ENCODE measurements at regions of chr1 and their contacts with region 1.

Region 1: DNA sequence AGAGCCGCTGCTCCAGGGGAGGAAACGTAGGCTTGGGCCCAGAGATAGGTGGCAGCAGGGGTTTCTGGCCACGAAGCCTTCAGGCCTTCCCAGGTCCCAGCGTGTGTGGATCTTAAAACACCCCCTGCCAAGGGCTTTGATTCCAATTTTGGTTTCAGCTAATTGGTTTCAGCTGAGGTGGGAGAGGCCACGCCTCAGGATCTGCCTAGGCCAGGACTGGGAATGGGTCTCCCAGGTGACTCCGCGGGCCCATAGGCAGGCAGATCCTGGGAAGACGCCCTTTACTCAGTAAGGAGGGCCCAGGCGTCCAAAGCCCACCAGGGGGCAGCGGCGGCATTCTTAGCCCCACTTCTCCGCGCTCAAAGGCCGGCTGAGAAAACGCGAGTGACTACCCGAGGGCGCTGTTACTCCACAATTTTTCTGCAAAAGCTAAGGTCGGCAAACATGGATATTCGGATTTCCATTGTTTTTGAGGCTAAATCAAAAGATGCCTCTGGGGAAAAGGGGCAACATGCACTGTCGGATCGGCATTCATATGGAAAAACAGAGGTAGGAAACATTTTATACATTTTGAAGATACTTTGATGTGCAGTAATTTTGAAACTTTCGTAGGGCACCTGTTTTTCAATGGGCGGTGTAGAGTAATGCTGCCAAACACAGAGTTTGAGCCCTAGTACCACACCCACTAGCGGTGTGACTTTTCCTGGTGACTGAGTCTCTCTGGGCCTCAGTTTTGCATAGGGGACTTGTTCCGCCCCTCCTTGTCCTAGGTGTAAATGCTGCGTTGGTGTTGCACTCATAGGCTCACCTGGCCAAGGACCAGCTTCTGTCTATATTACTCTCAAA is 31.8 kb upstream of the BCL10 start:
- DNase-seq: peak; percentile 57
- ATAC-seq: peak; percentile 95
- H3K4me3 Mint-ChIP-seq: peak overlapping the region; percentile 66
- H3K27ac Mint-ChIP-seq: peak overlapping the region; percentile 41
- H3K4me1 Mint-ChIP-seq: peaks cover 9% of the 10 kb centered on the region
- H3K27me3 Mint-ChIP-seq: peaks cover 2% of the 10 kb centered on the region
- CTCF ChIP-seq: peak; percentile 61

Region 2: DNA sequence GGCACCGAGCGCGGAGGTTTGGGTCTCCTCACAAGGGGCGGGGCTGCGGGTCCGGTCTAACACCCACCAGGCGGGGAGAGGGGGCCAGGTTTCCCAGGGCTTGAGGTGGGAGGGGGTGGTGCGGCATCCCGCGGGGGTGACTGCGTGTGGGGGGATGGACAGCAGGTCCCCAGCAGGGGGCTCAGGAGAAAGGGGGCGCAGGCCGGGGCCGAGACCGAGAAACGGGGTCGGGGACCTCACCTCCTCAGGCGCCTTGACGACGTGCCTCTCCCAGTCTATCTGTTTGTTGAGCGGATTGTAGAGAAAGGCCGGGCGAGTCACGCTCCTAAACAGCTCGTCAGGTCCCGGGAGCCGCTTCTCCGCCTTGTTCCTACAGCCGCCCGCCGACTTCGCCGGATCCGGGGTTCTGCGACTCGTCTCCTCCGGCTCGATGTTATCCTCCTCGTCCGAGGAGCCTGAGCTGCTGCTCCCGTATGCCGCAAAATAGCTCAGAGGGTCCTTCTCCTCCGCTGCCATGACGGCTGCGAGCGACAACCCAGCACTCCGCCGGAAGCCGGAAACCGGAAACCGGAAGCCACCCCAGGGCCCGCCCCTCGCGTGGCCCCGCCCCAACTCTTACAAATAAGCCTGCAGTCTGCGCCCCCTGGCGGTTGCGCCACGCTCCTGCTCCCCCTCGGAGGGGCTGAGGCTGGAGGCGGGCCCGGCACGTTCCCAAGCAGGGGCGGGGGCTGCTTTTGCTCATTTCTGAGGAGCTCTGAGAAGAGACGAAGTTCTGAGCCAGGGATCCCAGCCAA is 48.9 kb before region 1 on chr1 and contains the start of gene C1orf52:
- CTCF ChIA-PET with region 1: no interaction called
- POLR2A ChIA-PET with region 1: no interaction called
- intact Hi-C with region 1: loop called (anchors 1 kb)
- DNase-seq: peak; percentile 99
- ATAC-seq: peak; percentile 96
- H3K4me3 Mint-ChIP-seq: peak within 1 kb of the TSS; percentile 98
- H3K27ac Mint-ChIP-seq: peak within 1 kb of the TSS; percentile 92
- H3K4me1 Mint-ChIP-seq: peaks cover 37% of the 10 kb centered on the region
- H3K27me3 Mint-ChIP-seq: no peaks in the 10 kb centered on the region
- CTCF ChIP-seq: peak; percentile 88
- total RNA-seq, gene C1orf52: 31.4 and 32.0 TPM in 2 replicates

Region 3: DNA sequence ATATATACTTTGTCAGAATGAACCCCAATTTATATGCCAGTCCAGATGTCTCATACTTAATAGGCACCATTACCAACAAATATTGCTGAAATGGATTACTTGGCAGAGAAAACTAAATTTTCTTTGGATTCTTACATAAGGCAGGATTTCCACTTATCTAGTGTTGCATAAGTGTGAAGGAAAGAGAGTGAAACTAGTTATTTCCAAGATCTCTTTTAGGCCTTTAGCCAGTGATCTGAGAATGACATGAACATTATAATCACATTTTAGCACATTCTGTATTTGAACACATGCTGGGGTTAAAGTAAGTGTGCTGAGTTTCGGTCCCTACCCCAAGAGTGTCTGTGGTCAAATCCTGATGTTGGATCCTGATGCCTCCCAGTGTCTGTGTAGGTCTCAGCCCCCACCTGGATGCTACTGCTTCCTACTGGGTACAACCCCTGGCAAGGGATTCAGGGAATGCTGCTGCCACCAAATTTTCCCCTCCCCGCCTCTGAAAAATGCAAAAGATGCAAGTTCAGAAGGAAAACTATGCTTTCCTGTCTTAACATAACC is 145.5 kb after region 1 on chr1:
- CTCF ChIA-PET with region 1: no interaction called
- POLR2A ChIA-PET with region 1: no interaction called
- intact Hi-C with region 1: no loop called
- DNase-seq: no peak
- ATAC-seq: no peak
- H3K4me3 Mint-ChIP-seq: no peak overlapping the region
- H3K27ac Mint-ChIP-seq: no peak overlapping the region
- H3K4me1 Mint-ChIP-seq: no peaks in the 10 kb centered on the region
- H3K27me3 Mint-ChIP-seq: no peaks in the 10 kb centered on the region
- CTCF ChIP-seq: no peak

Region 4: GRCh38 chr1:85464497-85465098 is 156.4 kb after region 1 on chr1:
- CTCF ChIA-PET with region 1: no interaction called
- POLR2A ChIA-PET with region 1: no interaction called
- intact Hi-C with region 1: loop called (anchors 10 kb)
- DNase-seq: peak; percentile 26
- ATAC-seq: peak; percentile 70
- H3K4me3 Mint-ChIP-seq: peak overlapping the region; percentile 76
- H3K27ac Mint-ChIP-seq: no peak overlapping the region
- H3K4me1 Mint-ChIP-seq: peaks cover 7% of the 10 kb centered on the region
- H3K27me3 Mint-ChIP-seq: peaks cover 44% of the 10 kb centered on the region
- CTCF ChIP-seq: no peak

Region 5: DNA sequence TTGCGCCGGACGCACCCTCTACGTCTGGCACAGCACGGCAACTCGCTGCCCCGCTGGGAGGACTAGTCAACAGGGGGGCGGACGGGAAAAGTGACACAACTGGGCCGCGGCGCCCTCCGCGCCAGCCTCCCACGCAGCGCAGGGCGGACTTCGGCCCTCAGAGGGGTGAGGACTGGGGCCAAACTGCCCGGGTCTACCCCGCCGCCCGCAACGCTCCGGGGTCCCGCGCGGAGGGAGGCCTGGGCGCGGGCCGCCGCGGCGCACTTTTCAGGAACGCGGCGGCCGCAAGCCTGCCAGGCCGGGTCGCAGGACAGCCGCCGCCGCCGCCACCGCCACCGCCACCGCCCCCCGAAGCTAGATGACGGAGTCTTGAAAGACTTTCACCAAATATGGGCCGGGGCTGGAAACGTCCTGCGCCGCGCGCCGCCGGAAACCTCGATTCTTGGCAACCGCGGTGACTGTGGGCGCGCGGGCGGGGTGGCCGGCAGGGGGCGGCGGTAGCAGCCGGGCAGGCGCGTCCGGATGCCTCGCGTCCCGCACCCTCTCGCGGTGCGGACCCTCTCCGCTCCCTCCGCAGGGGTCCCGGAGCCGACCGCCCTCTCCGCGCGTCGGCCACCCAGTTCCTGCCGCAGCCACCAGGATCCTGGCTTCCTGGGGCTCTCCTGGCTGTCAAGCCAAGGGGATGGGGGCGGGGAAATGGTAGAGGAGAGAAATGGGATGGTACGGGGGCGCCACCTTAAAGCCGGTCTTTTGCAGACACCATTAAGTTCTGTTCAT is 268.6 kb after region 1 on chr1:
- CTCF ChIA-PET with region 1: interaction called, 3 read pairs
- POLR2A ChIA-PET with region 1: no interaction called
- intact Hi-C with region 1: loop called (anchors 1 kb)
- DNase-seq: peak; percentile 42
- ATAC-seq: peak; percentile 77
- H3K4me3 Mint-ChIP-seq: peak overlapping the region; percentile 74
- H3K27ac Mint-ChIP-seq: no peak overlapping the region
- H3K4me1 Mint-ChIP-seq: peaks cover 32% of the 10 kb centered on the region
- H3K27me3 Mint-ChIP-seq: peaks cover 62% of the 10 kb centered on the region
- CTCF ChIP-seq: no peak

Region 6: GRCh38 chr1:85884372-85885035 is 576.3 kb after region 1 on chr1:
- CTCF ChIA-PET with region 1: no interaction called
- POLR2A ChIA-PET with region 1: no interaction called
- intact Hi-C with region 1: loop called (anchors 10 kb)
- DNase-seq: no peak
- ATAC-seq: no peak
- H3K4me3 Mint-ChIP-seq: no peak overlapping the region
- H3K27ac Mint-ChIP-seq: no peak overlapping the region
- H3K4me1 Mint-ChIP-seq: no peaks in the 10 kb centered on the region
- H3K27me3 Mint-ChIP-seq: no peaks in the 10 kb centered on the region
- CTCF ChIP-seq: no peak

Region 7: DNA sequence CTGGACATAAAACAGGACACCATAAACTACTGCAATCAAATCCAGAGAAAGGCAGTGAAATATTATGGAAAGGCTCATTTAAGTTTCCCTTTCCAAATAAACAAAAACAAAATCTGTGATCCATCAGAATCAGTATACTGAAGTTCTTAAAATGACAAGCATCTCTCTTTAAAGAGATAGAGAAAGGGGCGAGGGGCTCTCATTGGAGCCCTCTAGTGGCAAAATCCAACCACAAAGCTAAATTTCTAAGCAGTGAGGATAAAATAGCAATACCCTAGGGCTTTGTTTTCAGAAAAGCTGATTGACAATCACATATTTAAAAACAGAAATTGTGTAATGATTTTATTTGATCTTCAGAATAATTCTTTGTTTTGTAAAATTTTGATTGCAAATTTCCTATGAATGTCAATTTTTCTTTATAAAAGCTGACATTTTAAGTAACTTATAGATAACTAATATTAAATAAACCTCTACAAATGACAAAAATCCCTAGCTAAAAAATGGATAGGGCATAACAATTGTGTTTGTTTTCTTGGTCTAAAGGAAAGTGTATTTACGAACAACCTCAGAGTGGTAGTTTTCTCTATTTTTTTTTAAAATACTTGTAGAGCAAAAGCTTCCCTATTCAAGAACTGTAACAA is 710.2 kb after region 1 on chr1:
- CTCF ChIA-PET with region 1: interaction called, 21 read pairs
- POLR2A ChIA-PET with region 1: no interaction called
- intact Hi-C with region 1: loop called (anchors 1 kb)
- DNase-seq: no peak
- ATAC-seq: no peak
- H3K4me3 Mint-ChIP-seq: no peak overlapping the region
- H3K27ac Mint-ChIP-seq: no peak overlapping the region
- H3K4me1 Mint-ChIP-seq: no peaks in the 10 kb centered on the region
- H3K27me3 Mint-ChIP-seq: no peaks in the 10 kb centered on the region
- CTCF ChIP-seq: peak; percentile 90